ENCODE measurements at regions of chr1 and their contacts with region 1.

Region 1: GRCh38 chr1:192954705-192955265 is 104.4 kb downstream of the UCHL5 start:
- DNase-seq: no peak
- ATAC-seq: no peak
- H3K4me3 ChIP-seq: no peak overlapping the region
- H3K27ac ChIP-seq: no peak overlapping the region
- H3K4me1 ChIP-seq: no peaks in the 10 kb centered on the region
- H3K27me3 ChIP-seq: no peaks in the 10 kb centered on the region
- CTCF ChIP-seq: no peak

Region 2: GRCh38 chr1:192435704-192436103 is 519.1 kb before region 1 on chr1:
- intact Hi-C with region 1: no loop called
- DNase-seq: no peak
- ATAC-seq: no peak
- H3K4me3 ChIP-seq: no peak overlapping the region
- H3K27ac ChIP-seq: no peak overlapping the region
- H3K4me1 ChIP-seq: no peaks in the 10 kb centered on the region
- H3K27me3 ChIP-seq: no peaks in the 10 kb centered on the region
- CTCF ChIP-seq: no peak

Region 3: GRCh38 chr1:192993426-192994050 is 38.8 kb after region 1 on chr1:
- intact Hi-C with region 1: loop called in 1 of 2 experiments (anchors 5 kb)
- DNase-seq: no peak
- ATAC-seq: no peak
- H3K4me3 ChIP-seq: no peak overlapping the region
- H3K27ac ChIP-seq: no peak overlapping the region
- H3K4me1 ChIP-seq: no peaks in the 10 kb centered on the region
- H3K27me3 ChIP-seq: no peaks in the 10 kb centered on the region
- CTCF ChIP-seq: no peak

Region 4: DNA sequence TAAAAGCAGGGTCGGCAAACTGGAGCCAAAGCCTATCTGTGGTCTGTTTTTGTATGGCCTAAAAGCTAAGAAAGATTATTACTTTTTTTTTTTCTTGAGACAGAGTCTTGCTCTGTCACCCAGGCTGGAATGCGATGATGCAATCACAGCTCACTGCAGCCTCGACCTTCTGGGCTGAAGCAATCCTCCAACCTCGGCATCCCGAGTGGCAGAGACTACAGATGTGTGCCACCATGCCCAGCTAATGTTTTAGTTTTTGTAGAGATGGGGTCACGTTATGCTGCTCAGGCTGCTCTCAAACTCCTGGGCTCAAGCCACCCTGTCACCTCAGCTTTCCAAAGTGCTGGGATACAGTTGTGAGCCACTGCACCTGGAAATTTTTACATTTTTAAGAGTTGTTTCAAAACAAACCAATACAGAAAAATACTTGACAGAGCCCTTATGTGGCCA is 156.9 kb after region 1 on chr1:
- intact Hi-C with region 1: no loop called
- DNase-seq: peak; percentile 71 to 75
- ATAC-seq: peak; percentile 66 to 75 (median 74)
- H3K4me3 ChIP-seq: peak overlapping the region; percentile 23
- H3K27ac ChIP-seq: peak overlapping the region; percentile 84
- H3K4me1 ChIP-seq: peaks cover 20% of the 10 kb centered on the region
- H3K27me3 ChIP-seq: no peaks in the 10 kb centered on the region
- CTCF ChIP-seq: no peak